ENCODE measurements at regions of chr5 and their contacts with region 1.

Region 1: DNA sequence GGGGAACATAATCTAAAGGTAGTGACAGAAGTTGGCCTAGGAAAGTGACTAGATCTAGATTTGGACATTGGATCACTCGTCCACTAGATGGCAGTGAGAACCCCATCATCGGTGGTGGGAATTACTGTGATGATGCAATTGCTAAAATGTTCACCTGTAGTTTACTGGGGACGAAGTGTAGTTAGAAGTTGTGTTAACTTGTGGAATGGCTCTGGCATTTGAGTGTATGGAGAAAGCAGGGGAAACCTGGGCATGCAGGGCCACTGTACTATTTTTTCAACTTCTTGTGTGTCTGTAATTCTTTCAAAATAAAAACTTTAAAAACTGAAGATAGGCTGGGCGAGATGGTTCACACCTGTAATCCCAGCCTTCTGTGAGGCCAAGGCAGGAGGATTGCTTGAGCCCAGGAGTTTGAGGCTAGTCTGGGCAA is 75.5 kb downstream of the PHAX start:
- DNase-seq: peak in 1 of 2 donors; percentile 58
- ATAC-seq: peak in 7 of 8 donors; percentile 55 to 84 (median 70)
- H3K4me3 ChIP-seq: no peak overlapping the region
- H3K27ac ChIP-seq: no peak overlapping the region
- H3K4me1 ChIP-seq: peaks cover 0 to 10% (median 0%) of the 10 kb centered on the region in 9 donors
- H3K27me3 ChIP-seq: peaks cover 0 to 6% (median 0%) of the 10 kb centered on the region in 7 donors
- CTCF ChIP-seq: peak; percentile 60 to 89 (median 83)

Region 2: GRCh38 chr5:126640866-126641265 is 35.3 kb before region 1 on chr5:
- intact Hi-C with region 1: no loop called
- DNase-seq: no peak
- ATAC-seq: no peak
- H3K4me3 ChIP-seq: no peak overlapping the region
- H3K27ac ChIP-seq: no peak overlapping the region
- H3K4me1 ChIP-seq: no peaks in the 10 kb centered on the region
- H3K27me3 ChIP-seq: no peaks in the 10 kb centered on the region
- CTCF ChIP-seq: no peak

Region 3: GRCh38 chr5:126776497-126777256 is 100.5 kb after region 1 on chr5 and contains the start of gene LMNB1:
- intact Hi-C with region 1: loop called (anchors 1 to 5 kb)
- DNase-seq: peak; percentile 93 to 94
- ATAC-seq: peak; percentile 94 to 97 (median 96)
- H3K4me3 ChIP-seq: peak within 1 kb of the TSS; percentile 53 to 90 (median 74)
- H3K27ac ChIP-seq: peak within 1 kb of the TSS; percentile 36 to 92 (median 84)
- H3K4me1 ChIP-seq: peaks cover 0 to 36% (median 17%) of the 10 kb centered on the region in 9 donors
- H3K27me3 ChIP-seq: no peaks in the 10 kb centered on the region
- CTCF ChIP-seq: peak in 2 of 9 donors; percentile 13 to 17
- total RNA-seq, gene LMNB1: 0.78 to 14.7 (median 1.4) TPM

Region 4: DNA sequence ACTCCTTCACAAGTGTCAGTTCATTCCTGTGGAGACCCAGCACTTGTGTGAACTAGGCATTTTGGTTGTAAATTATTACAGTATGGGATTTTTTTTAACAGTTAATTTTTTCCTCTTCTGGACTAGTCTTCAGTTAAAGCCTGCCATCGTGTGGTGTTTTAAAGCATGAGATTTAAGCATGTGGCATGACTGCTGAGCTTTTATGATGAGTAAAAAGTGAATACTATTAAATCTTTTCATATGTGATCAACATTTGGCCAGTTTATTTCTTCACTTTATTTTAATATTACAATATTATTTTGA is 125.7 kb after region 1 on chr5:
- intact Hi-C with region 1: loop called in 1 of 10 experiments (anchors 5 kb)
- DNase-seq: no peak
- ATAC-seq: no peak
- H3K4me3 ChIP-seq: no peak overlapping the region
- H3K27ac ChIP-seq: no peak overlapping the region
- H3K4me1 ChIP-seq: peaks cover 0 to 16% (median 0%) of the 10 kb centered on the region in 9 donors
- H3K27me3 ChIP-seq: no peaks in the 10 kb centered on the region
- CTCF ChIP-seq: peak in 7 of 9 donors; percentile 13 to 54 (median 51)

Region 5: GRCh38 chr5:127040796-127041520 is 364.7 kb after region 1 on chr5:
- intact Hi-C with region 1: loop called in 1 of 10 experiments (anchors 10 kb)
- DNase-seq: no peak
- ATAC-seq: peak; percentile 13 to 79 (median 68)
- H3K4me3 ChIP-seq: peak overlapping the region in 2 of 10 donors; percentile 1 to 6
- H3K27ac ChIP-seq: peak overlapping the region in 8 of 10 donors; percentile 1 to 63 (median 36)
- H3K4me1 ChIP-seq: peaks cover 3 to 39% (median 26%) of the 10 kb centered on the region in 9 donors
- H3K27me3 ChIP-seq: no peaks in the 10 kb centered on the region
- CTCF ChIP-seq: no peak

Region 6: DNA sequence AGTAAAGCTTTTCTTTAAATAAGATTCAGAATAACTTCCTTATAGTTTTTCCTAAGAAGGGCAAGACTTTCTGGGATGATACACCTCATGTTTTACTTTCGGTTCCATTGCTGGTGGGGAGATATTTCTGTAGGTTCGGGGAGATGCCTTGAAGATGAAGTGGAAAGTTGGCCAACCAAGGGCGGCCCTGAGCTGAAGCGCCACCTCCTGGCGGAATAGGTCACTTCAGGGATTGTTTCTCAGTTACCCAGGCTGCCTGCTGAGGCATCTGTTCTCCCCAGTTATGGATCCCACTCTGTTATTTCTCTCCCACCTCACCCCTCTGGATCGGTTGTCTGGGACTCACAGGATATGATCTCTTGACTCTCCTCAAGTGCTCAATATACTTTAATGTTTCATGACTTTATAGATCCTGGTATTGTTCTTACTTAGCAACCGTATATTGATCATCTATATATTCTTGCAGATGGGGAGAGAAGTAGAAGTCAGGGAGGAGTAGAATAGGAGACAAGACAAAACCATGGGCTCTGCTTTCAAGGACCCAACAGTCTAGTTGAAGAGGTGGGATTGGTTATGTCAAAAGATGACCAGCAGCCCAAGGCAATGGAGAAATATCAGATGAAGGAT is 637.8 kb after region 1 on chr5:
- intact Hi-C with region 1: loop called in 3 of 10 experiments (anchors 10 kb)
- DNase-seq: peak; percentile 48 to 53
- ATAC-seq: peak in 5 of 8 donors; percentile 42 to 64 (median 53)
- H3K4me3 ChIP-seq: no peak overlapping the region
- H3K27ac ChIP-seq: no peak overlapping the region
- H3K4me1 ChIP-seq: no peaks in the 10 kb centered on the region
- H3K27me3 ChIP-seq: peaks cover 0 to 3% (median 0%) of the 10 kb centered on the region in 7 donors
- CTCF ChIP-seq: peak; percentile 52 to 89 (median 82)